ENCODE measurements at regions of chr14 and their contacts with region 1.

Region 1: GRCh38 chr14:20970983-20971704 is 15.9 kb downstream of the RNASE2 start:
- DNase-seq: peak; percentile 87
- H3K4me3 ChIP-seq: peak overlapping the region; percentile 59 to 68
- H3K27ac ChIP-seq: peak overlapping the region in 1 of 2 experiments; percentile 36; a peak in 1 of 4 replicates
- H3K4me1 ChIP-seq: peaks cover 0 to 3% of the 10 kb centered on the region in 2 experiments; a peak in 1 of 4 replicates
- H3K27me3 ChIP-seq: peaks cover 9% of the 10 kb centered on the region; the same call in 1 of the 2 replicates
- CTCF ChIP-seq: peak; percentile 91
- EP300 ChIP-seq: no peak
- RAD21 ChIP-seq: peak; percentile 62

Region 2: GRCh38 chr14:20697273-20698017 is 273.7 kb before region 1 on chr14:
- CTCF ChIA-PET with region 1: interaction called, 15 read pairs
- POLR2A ChIA-PET with region 1: no interaction called
- DNase-seq: peak; percentile 59
- H3K4me3 ChIP-seq: no peak overlapping the region; a peak in 1 of 4 replicates
- H3K27ac ChIP-seq: no peak overlapping the region
- H3K4me1 ChIP-seq: no peaks in the 10 kb centered on the region
- H3K27me3 ChIP-seq: no peaks in the 10 kb centered on the region; the same call in 1 of the 2 replicates
- CTCF ChIP-seq: peak; percentile 75
- EP300 ChIP-seq: no peak
- RAD21 ChIP-seq: peak; percentile 73

Region 3: GRCh38 chr14:20836668-20837338 is 134.3 kb before region 1 on chr14:
- CTCF ChIA-PET with region 1: no interaction called
- POLR2A ChIA-PET with region 1: no interaction called
- DNase-seq: no peak
- H3K4me3 ChIP-seq: no peak overlapping the region
- H3K27ac ChIP-seq: no peak overlapping the region
- H3K4me1 ChIP-seq: no peaks in the 10 kb centered on the region
- H3K27me3 ChIP-seq: peaks cover 27% of the 10 kb centered on the region; the same call in 1 of the 2 replicates
- CTCF ChIP-seq: peak; percentile 39
- EP300 ChIP-seq: no peak
- RAD21 ChIP-seq: no peak

Region 4: DNA sequence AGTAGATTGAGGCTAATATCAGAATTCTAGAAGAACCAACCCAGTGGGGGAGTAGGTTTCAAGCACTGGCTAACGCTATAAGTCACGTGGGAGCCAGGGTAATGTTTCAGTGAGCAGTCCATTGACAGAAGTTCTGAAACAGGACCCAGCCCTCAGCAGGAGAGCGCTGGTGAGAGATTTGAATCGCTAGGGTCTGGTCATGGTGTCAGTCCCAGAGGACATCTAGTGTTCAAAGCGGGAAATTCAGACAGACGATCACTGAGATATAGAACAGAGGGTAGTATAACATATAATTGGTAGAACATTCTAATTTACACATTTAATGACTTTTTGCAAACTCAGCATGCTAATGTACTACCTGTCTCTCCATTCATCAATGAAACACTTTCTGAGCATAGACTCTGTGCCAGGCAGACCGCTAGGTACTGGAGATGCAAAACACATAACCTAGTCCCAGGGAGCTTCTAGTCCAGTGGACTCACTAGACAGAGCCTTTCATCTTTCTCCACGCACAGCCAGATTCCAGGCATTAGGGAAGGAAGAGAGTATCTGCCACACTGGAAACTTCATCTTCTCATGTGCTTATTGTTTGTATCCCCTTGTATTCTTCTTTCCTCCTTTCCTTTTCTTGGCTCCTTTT is 115.4 kb before region 1 on chr14:
- CTCF ChIA-PET with region 1: interaction called, 49 read pairs
- POLR2A ChIA-PET with region 1: no interaction called
- DNase-seq: peak; percentile 42
- H3K4me3 ChIP-seq: no peak overlapping the region
- H3K27ac ChIP-seq: no peak overlapping the region
- H3K4me1 ChIP-seq: peaks cover 0 to 3% of the 10 kb centered on the region in 2 experiments; a peak in 1 of 4 replicates
- H3K27me3 ChIP-seq: peaks cover 43% of the 10 kb centered on the region; the same call in 1 of the 2 replicates
- CTCF ChIP-seq: peak; percentile 66
- EP300 ChIP-seq: no peak
- RAD21 ChIP-seq: peak; percentile 60

Region 5: GRCh38 chr14:20982646-20983369 is 11.7 kb after region 1 on chr14:
- CTCF ChIA-PET with region 1: interaction called, 79 read pairs
- POLR2A ChIA-PET with region 1: no interaction called
- DNase-seq: no peak
- H3K4me3 ChIP-seq: no peak overlapping the region
- H3K27ac ChIP-seq: no peak overlapping the region
- H3K4me1 ChIP-seq: peaks cover 0 to 13% of the 10 kb centered on the region in 2 experiments; a peak in 2 of 4 replicates
- H3K27me3 ChIP-seq: peaks cover 10% of the 10 kb centered on the region; the same call in 1 of the 2 replicates
- CTCF ChIP-seq: no peak
- EP300 ChIP-seq: no peak
- RAD21 ChIP-seq: no peak

Region 6: DNA sequence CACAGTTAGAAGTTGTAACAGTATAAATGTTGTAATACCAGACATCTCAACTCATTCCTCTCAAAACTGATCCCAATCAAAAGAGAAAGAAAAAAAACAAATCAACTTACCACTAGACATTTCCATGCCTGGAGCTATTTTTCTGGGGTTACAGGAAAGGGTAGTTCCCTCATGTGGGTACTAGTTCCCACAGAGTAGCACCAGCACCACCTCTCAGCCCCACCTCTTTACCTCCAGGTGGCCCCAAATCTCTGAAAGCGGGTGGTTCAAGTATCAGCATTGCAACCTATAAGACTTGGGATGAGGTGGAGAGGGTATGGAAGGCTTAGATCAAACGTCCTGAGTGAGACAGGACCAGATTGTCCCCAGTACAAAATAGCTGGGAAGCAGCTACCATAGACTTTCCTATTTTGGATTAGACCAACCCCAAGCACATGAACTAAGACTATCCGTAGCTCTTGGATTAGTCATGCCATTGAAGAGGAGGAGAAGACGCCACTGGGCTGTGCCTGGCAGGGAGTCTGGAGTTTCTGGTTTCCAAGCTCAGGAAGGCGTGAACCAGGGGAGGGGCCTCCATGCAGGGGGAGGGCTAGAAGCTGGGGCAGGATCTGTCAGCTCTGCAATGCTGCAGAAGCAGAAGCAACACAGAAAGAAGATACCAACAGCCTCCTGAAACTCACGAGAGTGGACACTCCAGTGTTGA is 27.7 kb after region 1 on chr14 and contains the start of gene SLC39A2:
- CTCF ChIA-PET with region 1: interaction called, 23 read pairs
- POLR2A ChIA-PET with region 1: no interaction called
- DNase-seq: no peak
- H3K4me3 ChIP-seq: no peak within 1 kb of the TSS
- H3K27ac ChIP-seq: no peak within 1 kb of the TSS
- H3K4me1 ChIP-seq: no peaks in the 10 kb centered on the region; a peak in 1 of 4 replicates
- H3K27me3 ChIP-seq: no peaks in the 10 kb centered on the region
- CTCF ChIP-seq: no peak
- EP300 ChIP-seq: no peak
- RAD21 ChIP-seq: no peak
- polyA plus RNA-seq, gene SLC39A2: not detected in 2 replicates

Region 7: GRCh38 chr14:21647380-21647779 is 676.2 kb after region 1 on chr14:
- CTCF ChIA-PET with region 1: no interaction called
- POLR2A ChIA-PET with region 1: no interaction called
- DNase-seq: no peak
- H3K4me3 ChIP-seq: no peak overlapping the region
- H3K27ac ChIP-seq: no peak overlapping the region
- H3K4me1 ChIP-seq: no peaks in the 10 kb centered on the region; a peak in 1 of 4 replicates
- H3K27me3 ChIP-seq: peaks cover 16% of the 10 kb centered on the region
- CTCF ChIP-seq: no peak
- EP300 ChIP-seq: no peak
- RAD21 ChIP-seq: no peak